ENCODE measurements at regions of chr1 and their contacts with region 1.

Region 1: GRCh38 chr1:24070821-24071393 is 41.0 kb downstream of the MYOM3 start:
- DNase-seq: peak; percentile 80 to 92
- H3K4me3 ChIP-seq: no peak overlapping the region
- CTCF ChIP-seq: peak in 1 of 3 donors; percentile 57
- POLR2A ChIP-seq: no peak

Region 2: DNA sequence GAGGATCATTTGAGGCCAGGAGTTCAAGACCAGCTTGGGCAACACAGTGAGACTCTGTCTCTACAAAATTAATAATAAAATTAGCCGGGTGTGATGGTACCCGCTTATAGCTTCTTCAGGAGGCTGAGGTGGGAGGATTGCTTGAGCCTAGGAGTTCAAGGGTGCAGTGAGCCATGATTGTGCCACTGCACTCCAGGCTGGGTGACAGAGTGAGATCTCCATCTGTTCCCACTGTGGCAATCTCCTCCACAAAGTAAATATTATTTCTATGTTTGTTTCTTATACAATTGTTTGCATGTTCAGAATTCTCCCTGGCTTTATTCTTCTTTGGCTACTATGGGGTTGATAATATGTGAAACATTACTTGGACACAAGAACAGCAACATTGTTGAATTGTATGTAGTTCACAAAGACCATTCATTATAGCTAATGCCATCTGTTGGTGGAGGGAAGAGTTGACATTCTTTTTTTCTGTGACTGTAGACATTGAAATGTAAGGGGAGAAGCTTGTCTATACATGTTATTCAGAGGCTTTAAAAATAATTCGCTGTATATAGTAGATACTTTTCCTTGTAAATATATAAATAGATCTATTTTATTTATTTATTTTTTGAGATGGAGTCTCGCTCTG is 43.0 kb before region 1 on chr1:
- intact Hi-C with region 1: no loop called
- DNase-seq: no peak
- H3K4me3 ChIP-seq: no peak overlapping the region
- CTCF ChIP-seq: no peak
- POLR2A ChIP-seq: no peak

Region 3: GRCh38 chr1:24111996-24112779 is 41.3 kb after region 1 on chr1 and contains the start of gene MYOM3:
- intact Hi-C with region 1: loop called (anchors 5 kb)
- DNase-seq: peak; percentile 65 to 93
- H3K4me3 ChIP-seq: no peak within 1 kb of the TSS
- CTCF ChIP-seq: no peak
- POLR2A ChIP-seq: no peak
- total RNA-seq, gene MYOM3: 1.5 to 1.9 (median 1.7) TPM

Region 4: DNA sequence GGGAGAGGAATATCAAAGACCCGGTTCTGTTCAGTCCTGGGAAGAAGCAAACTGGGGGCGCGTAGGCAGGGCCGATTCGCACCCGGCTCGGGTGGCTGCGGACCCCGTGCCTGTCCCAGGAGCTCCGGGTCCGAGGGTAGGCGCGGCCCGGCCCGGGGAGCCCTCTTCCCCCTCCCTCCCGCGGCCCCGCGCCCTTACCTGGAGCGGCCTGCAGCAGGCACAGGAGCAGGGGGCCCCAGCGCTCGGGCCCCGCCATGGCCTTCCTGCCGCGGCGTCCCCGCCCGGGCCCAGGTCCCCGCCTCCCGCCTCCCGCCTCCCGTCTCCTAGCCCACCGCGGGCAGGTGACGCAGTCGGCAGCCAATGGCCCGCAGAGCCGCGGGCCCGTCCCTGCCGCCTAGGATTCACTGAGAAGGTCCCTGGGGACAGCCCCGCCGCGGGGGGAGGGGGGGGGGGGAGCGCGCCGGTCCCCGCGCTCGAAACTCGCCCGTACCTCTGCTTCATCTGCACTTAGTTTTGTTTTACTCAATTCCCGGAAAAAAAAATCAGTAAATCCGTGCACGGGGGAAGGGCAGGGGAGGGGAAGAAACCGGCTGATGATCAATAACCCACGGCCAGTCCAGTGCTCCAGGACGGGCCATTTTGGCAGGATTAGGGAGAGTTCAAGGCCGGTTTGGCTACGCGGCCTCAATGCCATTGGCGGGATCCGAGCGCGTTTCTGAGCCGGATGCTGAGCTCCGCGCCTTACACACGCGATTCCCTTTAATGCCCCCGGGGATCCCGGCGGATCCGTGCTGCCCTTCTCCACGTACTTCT is 116.3 kb after region 1 on chr1 and contains the start of gene IFNLR1:
- intact Hi-C with region 1: loop called (anchors 5 kb)
- DNase-seq: peak in 1 of 2 donors; percentile 88
- H3K4me3 ChIP-seq: peak within 1 kb of the TSS; percentile 29
- CTCF ChIP-seq: no peak
- POLR2A ChIP-seq: no peak
- total RNA-seq, gene IFNLR1: 10.4 to 16.4 (median 14.4) TPM

Measured in lower leg skin (tissue), 4 donors.